Breast epithelium (tissue), 4 donors: ENCODE measurements at regions of chr10 and their contacts with region 1.

Region 1: GRCh38 chr10:53102424-53102823 is 329.8 kb upstream of the MBL2 start:
- DNase-seq: no peak
- H3K4me3 ChIP-seq: no peak overlapping the region
- H3K27ac ChIP-seq: no peak overlapping the region
- H3K4me1 ChIP-seq: no peaks in the 10 kb centered on the region
- H3K27me3 ChIP-seq: no peaks in the 10 kb centered on the region
- CTCF ChIP-seq: no peak
- POLR2A ChIP-seq: no peak

Region 2: DNA sequence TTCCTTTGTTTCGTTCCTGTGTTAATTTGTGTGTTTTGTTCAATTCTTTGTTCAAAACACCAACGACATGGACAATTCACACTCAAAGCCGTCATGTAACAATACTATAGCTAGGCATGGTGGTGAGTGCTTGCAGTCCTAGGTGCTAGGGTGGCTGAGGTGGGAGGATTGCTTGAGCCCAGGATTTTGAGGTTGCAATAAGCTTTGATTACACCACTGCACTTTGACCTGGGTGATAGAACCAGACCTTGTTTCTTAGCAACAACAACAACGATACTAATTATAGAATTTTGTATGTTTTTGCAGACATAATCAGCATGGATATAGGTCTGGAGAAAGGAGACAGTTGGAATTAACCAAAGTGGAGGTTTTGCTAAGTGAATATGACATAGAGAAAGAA is 762.4 kb after region 1 on chr10:
- intact Hi-C with region 1: loop called (anchors 5 kb)
- DNase-seq: no peak
- H3K4me3 ChIP-seq: no peak overlapping the region
- H3K27ac ChIP-seq: no peak overlapping the region
- H3K4me1 ChIP-seq: no peaks in the 10 kb centered on the region
- H3K27me3 ChIP-seq: no peaks in the 10 kb centered on the region
- CTCF ChIP-seq: no peak
- POLR2A ChIP-seq: no peak